IMR-90 (cell line): ENCODE measurements at regions of chr3 and their contacts with region 1.

Region 1: GRCh38 chr3:168467115-168467714 is 371.5 kb upstream of the GOLIM4 start:
- DNase-seq: peak; percentile 55
- ATAC-seq: peak; percentile 90
- H3K4me3 ChIP-seq: no peak overlapping the region
- H3K27ac ChIP-seq: no peak overlapping the region
- H3K4me1 ChIP-seq: no peaks in the 10 kb centered on the region
- H3K27me3 ChIP-seq: no peaks in the 10 kb centered on the region
- CTCF ChIP-seq: peak; percentile 60
- POLR2A ChIP-seq: no peak
- RAD21 ChIP-seq: peak; percentile 73

Region 2: DNA sequence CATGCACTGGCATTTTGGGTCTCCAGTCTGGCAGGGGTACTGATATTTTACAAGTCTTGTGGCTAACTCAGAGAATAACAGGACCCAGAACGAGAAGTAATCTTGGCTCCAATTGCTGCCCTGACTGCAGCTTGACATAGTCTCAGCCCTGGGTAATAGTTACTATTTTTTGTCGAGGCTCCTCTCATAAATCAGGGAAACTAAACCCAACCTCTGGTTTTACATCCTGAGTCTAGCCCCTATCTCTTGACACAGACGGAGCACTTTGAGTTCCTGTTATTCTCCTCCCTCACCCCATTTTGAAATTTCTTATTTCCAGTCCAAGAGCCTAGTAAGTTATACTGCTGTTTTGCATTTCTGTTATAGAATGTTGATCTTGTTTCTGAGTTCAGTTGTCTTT is 95.4 kb before region 1 on chr3:
- CTCF ChIA-PET with region 1: no interaction called
- POLR2A ChIA-PET with region 1: no interaction called
- dilution Hi-C with region 1: no loop called
- in situ Hi-C with region 1: no loop called
- intact Hi-C with region 1: loop called (anchors 5 kb)
- DNase-seq: no peak
- ATAC-seq: no peak
- H3K4me3 ChIP-seq: no peak overlapping the region
- H3K27ac ChIP-seq: no peak overlapping the region
- H3K4me1 ChIP-seq: no peaks in the 10 kb centered on the region
- H3K27me3 ChIP-seq: no peaks in the 10 kb centered on the region
- CTCF ChIP-seq: no peak
- POLR2A ChIP-seq: no peak
- RAD21 ChIP-seq: no peak